Sciatic nerve (tissue), 2 donors: ENCODE measurements at regions of chr20 and their contacts with region 1.

Region 1: DNA sequence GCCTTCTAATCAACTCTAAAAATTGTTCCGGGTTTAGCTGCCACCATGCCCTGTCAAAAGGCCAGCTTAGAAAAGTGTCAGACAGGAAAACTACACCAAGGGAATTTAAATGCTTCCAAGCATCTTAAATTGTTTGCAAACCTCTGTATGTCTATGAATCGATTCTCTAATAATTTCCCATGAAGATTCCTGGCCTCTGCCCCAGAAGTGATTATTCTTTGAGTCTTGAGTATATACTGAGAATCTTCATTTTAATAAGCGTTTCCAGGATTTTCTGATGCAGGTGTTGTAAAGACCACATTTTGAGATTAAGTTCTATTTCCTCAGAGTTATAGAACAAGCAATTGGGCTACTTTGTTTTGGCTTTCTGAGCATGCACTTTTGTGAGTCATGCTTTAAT is 471.8 kb upstream of the JAG1 start:
- DNase-seq: no peak
- ATAC-seq: no peak

Region 2: DNA sequence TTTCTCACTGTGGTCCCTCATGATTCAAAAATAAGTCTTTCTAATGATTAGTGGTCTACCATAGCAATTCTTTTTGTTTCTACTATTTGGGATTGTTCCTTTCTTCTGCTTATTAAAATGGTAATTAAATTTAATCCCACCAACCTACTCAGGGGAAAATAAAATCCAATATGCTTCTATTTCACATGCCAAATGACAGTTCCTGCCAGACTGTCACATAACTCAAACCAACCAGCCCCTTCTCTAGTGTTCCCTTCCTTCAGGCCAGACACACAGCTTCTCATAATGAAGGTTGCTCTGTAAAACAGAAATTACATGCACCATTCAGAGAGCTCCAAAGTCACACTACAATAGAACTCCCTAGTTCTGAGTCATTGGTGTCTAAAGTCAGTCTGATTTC is 1330.0 kb before region 1 on chr20:
- intact Hi-C with region 1: loop called (anchors 5 kb)
- DNase-seq: no peak
- ATAC-seq: no peak